Lower leg skin (tissue), 4 donors: ENCODE measurements at regions of chr4 and their contacts with region 1.

Region 1: DNA sequence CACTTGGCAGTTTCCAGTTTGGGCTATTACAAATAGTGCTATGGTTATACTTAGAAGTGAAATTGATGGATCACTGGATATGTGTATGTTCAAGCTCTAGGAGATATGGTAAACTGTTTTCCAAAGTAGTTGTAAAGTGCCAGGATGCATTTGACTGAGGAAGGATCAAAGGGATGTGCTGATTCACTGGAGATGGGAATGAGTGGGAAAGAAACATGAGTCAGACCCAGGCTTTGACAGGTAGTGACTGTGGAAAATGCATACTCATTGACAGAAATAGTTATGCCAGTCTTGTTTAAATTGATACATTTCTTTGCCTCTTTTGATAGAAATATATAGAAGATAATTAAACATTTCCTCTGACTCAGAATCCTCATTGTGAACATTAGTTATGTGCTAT is 77.9 kb downstream of the CEP135 start:
- DNase-seq: no peak
- H3K4me3 ChIP-seq: no peak overlapping the region
- CTCF ChIP-seq: no peak
- POLR2A ChIP-seq: no peak

Region 2: DNA sequence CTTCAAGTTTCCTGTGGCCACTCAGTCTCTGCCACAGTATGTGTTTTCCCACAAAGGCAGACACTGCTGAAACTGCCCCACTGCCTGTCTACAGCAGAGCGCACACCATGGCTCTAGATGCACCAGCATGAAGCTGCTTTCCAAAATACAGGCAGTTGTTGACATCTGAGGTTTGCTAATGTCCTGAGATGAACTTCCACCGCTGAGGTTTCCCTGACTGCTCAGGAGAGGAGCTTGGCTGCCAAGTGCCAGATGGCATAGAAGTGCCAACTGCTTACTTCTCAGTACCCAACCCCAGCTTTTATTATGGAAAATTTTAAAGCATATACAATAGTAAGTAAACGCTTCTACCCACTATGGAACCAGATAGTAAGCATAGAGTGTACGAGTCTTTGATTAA is 268.0 kb before region 1 on chr4:
- intact Hi-C with region 1: no loop called
- DNase-seq: no peak
- H3K4me3 ChIP-seq: no peak overlapping the region
- CTCF ChIP-seq: no peak
- POLR2A ChIP-seq: no peak

Region 3: DNA sequence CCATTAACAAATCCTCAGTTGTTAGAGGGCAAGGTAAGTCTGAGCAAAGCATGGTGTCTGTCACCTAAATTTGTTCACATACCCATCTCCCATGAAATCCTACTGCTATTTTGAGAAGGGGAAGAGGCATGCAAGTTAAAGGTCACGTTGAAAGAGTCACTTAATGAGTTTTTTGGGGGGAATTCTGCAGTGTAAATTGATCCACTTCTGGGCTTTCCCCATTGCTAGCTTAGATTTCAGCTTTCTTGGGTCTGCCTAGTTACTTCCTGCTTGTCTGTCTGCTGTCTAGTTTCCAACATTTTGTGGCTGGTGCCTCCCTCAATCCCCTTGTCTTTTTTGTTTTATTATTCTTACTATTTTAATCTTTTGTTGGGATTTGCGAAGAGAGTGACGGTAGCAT is 45.9 kb before region 1 on chr4:
- intact Hi-C with region 1: no loop called
- DNase-seq: no peak
- H3K4me3 ChIP-seq: no peak overlapping the region
- CTCF ChIP-seq: no peak
- POLR2A ChIP-seq: no peak

Region 4: DNA sequence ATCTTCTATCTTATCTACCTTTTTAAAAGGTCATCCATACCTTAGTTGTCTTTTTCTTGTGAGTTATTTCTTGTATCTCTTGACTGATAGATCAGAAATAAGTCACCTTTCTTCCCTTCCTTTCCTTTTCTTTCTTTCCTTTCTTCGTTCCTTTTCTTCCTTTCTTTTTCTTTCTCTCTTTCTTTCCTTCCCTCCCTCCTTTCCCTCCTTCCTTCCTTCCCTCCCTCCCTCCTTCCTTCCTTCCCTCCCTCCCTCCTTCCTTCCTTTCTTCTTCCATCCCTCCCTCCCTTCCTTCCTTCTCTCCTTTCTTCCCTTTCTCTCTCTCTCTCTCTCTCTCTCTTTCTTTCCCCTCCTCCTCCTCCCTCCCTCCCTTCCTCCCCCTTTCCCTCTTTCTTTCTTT is 15.6 kb after region 1 on chr4:
- intact Hi-C with region 1: loop called (anchors 2 kb)
- DNase-seq: no peak
- H3K4me3 ChIP-seq: no peak overlapping the region
- CTCF ChIP-seq: no peak
- POLR2A ChIP-seq: no peak